Gastrocnemius medialis (tissue), 4 donors: ENCODE measurements at regions of chr4 and their contacts with region 1.

Region 1: GRCh38 chr4:151117371-151117962 is 18.0 kb downstream of the RPS3A start:
- DNase-seq: peak in 1 of 2 donors; percentile 37
- ATAC-seq: peak; percentile 71 to 85
- H3K4me3 ChIP-seq: no peak overlapping the region
- H3K27ac ChIP-seq: peak overlapping the region in 1 of 4 donors; percentile 28
- H3K4me1 ChIP-seq: no peaks in the 10 kb centered on the region
- H3K27me3 ChIP-seq: no peaks in the 10 kb centered on the region
- CTCF ChIP-seq: peak; percentile 18 to 64 (median 55)
- POLR2A ChIP-seq: no peak

Region 2: GRCh38 chr4:151291485-151291884 is 174.0 kb after region 1 on chr4:
- in situ Hi-C with region 1: no loop called
- intact Hi-C with region 1: no loop called
- DNase-seq: no peak
- ATAC-seq: no peak
- H3K4me3 ChIP-seq: no peak overlapping the region
- H3K27ac ChIP-seq: no peak overlapping the region
- H3K4me1 ChIP-seq: peaks cover 10 to 27% of the 10 kb centered on the region in 2 donors
- H3K27me3 ChIP-seq: no peaks in the 10 kb centered on the region
- CTCF ChIP-seq: no peak
- POLR2A ChIP-seq: no peak

Region 3: GRCh38 chr4:151760712-151761527 is 643.5 kb after region 1 on chr4 and contains the start of gene GATB:
- in situ Hi-C with region 1: loop called in 1 of 4 experiments (anchors 25 kb)
- intact Hi-C with region 1: no loop called
- DNase-seq: peak; percentile 91 to 92
- ATAC-seq: peak; percentile 100
- H3K4me3 ChIP-seq: peak within 1 kb of the TSS; percentile 83 to 95 (median 92)
- H3K27ac ChIP-seq: peak within 1 kb of the TSS; percentile 72 to 88 (median 81)
- H3K4me1 ChIP-seq: peaks cover 7 to 11% of the 10 kb centered on the region in 2 donors
- H3K27me3 ChIP-seq: no peaks in the 10 kb centered on the region
- CTCF ChIP-seq: peak in 3 of 5 experiments; percentile 38 to 63 (median 52)
- POLR2A ChIP-seq: peak; percentile 48 to 55
- total RNA-seq, gene GATB: 18.7 to 34.0 (median 27.6) TPM